Activated T-helper 1 cell treated with anti-CD3 and anti-CD28 coated beads, Interleukin-12 subunit alpha, Interleukin-12 subunit beta, Interleukin-2, Interleukin-4 antibody, amounts not matched to agents 30 ng/mL and 10 ng/mL and 1 ng/mL, durations not matched to agents 14 hours and 24 hours and 36 hours (primary cell): ENCODE measurements at regions of chr3 and their contacts with region 1.

Region 1: GRCh38 chr3:112958811-112959560 is 15.9 kb downstream of the CD200R1 start:
- DNase-seq: no peak
- H3K4me3 Mint-ChIP-seq: peak overlapping the region; percentile 64
- H3K27ac Mint-ChIP-seq: peak overlapping the region; percentile 67
- H3K4me1 Mint-ChIP-seq: peaks cover 32% of the 10 kb centered on the region
- H3K27me3 Mint-ChIP-seq: no peaks in the 10 kb centered on the region

Region 2: GRCh38 chr3:112858410-112859069 is 100.4 kb before region 1 on chr3:
- intact Hi-C with region 1: loop called (anchors 5 kb)
- DNase-seq: no peak
- H3K4me3 Mint-ChIP-seq: peak overlapping the region; percentile 13
- H3K27ac Mint-ChIP-seq: peak overlapping the region; percentile 71
- H3K4me1 Mint-ChIP-seq: peaks cover 35% of the 10 kb centered on the region
- H3K27me3 Mint-ChIP-seq: no peaks in the 10 kb centered on the region

Region 3: DNA sequence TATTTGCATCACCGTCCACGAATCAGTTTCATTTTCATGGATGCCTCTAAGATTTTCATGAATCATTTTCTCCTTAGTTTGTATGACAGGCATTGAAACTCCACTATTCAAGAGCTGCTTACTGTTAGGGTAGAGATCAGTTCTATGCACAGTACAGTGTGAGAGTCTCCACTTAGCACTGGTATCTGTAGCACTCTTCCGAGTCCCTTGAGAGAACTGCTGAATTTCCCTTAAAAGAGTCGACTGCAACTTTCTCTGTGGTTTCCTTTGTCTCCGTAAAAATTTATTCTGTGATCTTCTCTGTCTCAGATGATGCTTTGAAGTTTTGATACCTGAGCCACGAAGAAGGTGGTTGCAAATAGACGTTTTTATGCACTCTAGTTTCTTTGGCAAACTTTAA is 46.6 kb after region 1 on chr3:
- intact Hi-C with region 1: loop called (anchors 1 kb)
- DNase-seq: peak; percentile 24
- H3K4me3 Mint-ChIP-seq: peak overlapping the region; percentile 67
- H3K27ac Mint-ChIP-seq: peak overlapping the region; percentile 91
- H3K4me1 Mint-ChIP-seq: peaks cover 83% of the 10 kb centered on the region
- H3K27me3 Mint-ChIP-seq: no peaks in the 10 kb centered on the region